Activated T-helper 1 cell treated with anti-CD3 and anti-CD28 coated beads, Interleukin-12 subunit alpha, Interleukin-12 subunit beta, Interleukin-2, Interleukin-4 antibody, amounts not matched to agents 30 ng/mL and 10 ng/mL and 1 ng/mL, durations not matched to agents 14 hours and 24 hours and 36 hours (primary cell): ENCODE measurements at regions of chr5 and their contacts with region 1.

Region 1: GRCh38 chr5:149828161-149828884 is 98.2 kb downstream of the PPARGC1B start:
- DNase-seq: peak; percentile 62
- H3K4me3 Mint-ChIP-seq: no peak overlapping the region
- H3K27ac Mint-ChIP-seq: peak overlapping the region; percentile 10
- H3K4me1 Mint-ChIP-seq: peaks cover 20% of the 10 kb centered on the region
- H3K27me3 Mint-ChIP-seq: no peaks in the 10 kb centered on the region

Region 2: DNA sequence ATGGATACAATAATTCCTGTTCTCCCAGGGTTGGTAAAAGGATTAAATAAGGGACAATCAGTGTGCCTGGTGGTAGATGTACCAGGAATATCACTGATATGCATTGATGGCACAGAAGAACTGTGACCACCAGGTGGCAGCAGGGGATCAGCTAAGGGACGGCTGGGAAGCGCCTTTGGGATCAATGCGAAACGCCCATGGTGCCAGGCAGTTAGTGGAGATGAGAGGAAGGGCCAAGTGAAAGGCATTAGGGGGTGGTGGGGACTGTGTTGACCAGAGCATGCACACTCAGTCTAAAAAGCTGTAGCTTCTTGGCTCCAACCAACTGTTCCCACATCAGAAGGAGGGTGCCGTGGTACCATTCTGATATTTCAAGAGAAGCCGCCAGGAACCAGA is 191.5 kb before region 1 on chr5:
- intact Hi-C with region 1: loop called (anchors 1 kb)
- DNase-seq: no peak
- H3K4me3 Mint-ChIP-seq: no peak overlapping the region
- H3K27ac Mint-ChIP-seq: no peak overlapping the region
- H3K4me1 Mint-ChIP-seq: peaks cover 20% of the 10 kb centered on the region
- H3K27me3 Mint-ChIP-seq: peaks cover 2% of the 10 kb centered on the region

Region 3: DNA sequence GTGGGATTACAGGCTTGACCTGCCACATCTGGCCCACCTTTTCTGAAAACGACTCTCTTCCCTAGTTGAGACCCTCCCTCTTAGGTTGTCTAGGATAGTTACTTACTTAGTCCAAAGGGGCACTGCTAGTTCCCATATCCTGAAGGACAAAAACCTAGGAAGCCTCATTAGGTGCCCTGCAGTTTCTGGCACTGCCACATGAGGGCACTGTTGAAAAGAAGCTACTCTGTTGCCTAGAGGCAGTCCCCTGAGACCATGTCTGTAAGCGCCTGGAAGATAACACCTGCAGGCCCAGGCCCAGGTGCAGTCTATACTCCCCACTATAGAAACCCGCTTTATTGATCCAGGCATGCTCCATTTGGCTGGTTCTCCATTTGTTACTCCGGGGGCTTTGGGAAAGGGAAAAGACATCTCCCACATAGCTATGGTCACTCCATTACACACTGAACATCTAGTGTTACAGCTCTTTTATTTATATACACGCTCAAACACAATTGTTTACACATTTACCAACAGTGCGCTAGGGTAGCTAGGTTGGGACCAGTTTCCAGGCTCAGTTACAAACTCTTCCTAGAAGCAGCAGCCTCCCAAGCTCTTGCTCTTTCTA is 171.6 kb before region 1 on chr5:
- intact Hi-C with region 1: loop called (anchors 2 kb)
- DNase-seq: no peak
- H3K4me3 Mint-ChIP-seq: no peak overlapping the region
- H3K27ac Mint-ChIP-seq: no peak overlapping the region
- H3K4me1 Mint-ChIP-seq: no peaks in the 10 kb centered on the region
- H3K27me3 Mint-ChIP-seq: peaks cover 5% of the 10 kb centered on the region

Region 4: GRCh38 chr5:149667084-149667828 is 161.1 kb before region 1 on chr5:
- intact Hi-C with region 1: loop called (anchors 1 kb)
- DNase-seq: no peak
- H3K4me3 Mint-ChIP-seq: no peak overlapping the region
- H3K27ac Mint-ChIP-seq: no peak overlapping the region
- H3K4me1 Mint-ChIP-seq: peaks cover 4% of the 10 kb centered on the region
- H3K27me3 Mint-ChIP-seq: peaks cover 6% of the 10 kb centered on the region

Region 5: GRCh38 chr5:149731639-149732323 is 96.5 kb before region 1 on chr5:
- intact Hi-C with region 1: loop called (anchors 1 kb)
- DNase-seq: peak; percentile 35
- H3K4me3 Mint-ChIP-seq: peak overlapping the region; percentile 86
- H3K27ac Mint-ChIP-seq: peak overlapping the region; percentile 40
- H3K4me1 Mint-ChIP-seq: peaks cover 5% of the 10 kb centered on the region
- H3K27me3 Mint-ChIP-seq: peaks cover 5% of the 10 kb centered on the region

Region 6: DNA sequence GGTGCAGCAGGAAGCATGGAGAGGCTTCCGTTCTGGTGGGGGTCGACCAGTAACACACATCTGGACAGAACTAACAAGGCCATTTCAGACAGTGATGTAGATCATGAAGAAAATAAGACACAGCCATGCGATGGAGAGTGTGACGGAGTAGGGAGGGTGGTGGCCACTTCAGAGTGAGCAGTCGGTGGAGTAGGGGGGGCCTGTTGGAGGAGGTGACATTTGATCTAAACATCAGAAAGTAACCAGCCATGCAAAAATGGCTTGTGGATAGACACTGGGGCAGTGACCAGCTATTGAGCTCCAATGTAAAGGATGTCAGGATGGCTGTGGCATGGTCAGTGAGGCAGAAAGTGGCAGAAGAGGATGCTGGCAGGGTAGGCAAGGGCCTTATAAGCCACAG is 32.3 kb before region 1 on chr5:
- intact Hi-C with region 1: no loop called
- DNase-seq: no peak
- H3K4me3 Mint-ChIP-seq: no peak overlapping the region
- H3K27ac Mint-ChIP-seq: no peak overlapping the region
- H3K4me1 Mint-ChIP-seq: no peaks in the 10 kb centered on the region
- H3K27me3 Mint-ChIP-seq: no peaks in the 10 kb centered on the region